Posterior vena cava (tissue), 2 donors: ENCODE measurements at regions of chr6 and their contacts with region 1.

Region 1: GRCh38 chr6:149529650-149530049 is 16.2 kb downstream of the PPIL4 start:
- DNase-seq: no peak

Region 2: DNA sequence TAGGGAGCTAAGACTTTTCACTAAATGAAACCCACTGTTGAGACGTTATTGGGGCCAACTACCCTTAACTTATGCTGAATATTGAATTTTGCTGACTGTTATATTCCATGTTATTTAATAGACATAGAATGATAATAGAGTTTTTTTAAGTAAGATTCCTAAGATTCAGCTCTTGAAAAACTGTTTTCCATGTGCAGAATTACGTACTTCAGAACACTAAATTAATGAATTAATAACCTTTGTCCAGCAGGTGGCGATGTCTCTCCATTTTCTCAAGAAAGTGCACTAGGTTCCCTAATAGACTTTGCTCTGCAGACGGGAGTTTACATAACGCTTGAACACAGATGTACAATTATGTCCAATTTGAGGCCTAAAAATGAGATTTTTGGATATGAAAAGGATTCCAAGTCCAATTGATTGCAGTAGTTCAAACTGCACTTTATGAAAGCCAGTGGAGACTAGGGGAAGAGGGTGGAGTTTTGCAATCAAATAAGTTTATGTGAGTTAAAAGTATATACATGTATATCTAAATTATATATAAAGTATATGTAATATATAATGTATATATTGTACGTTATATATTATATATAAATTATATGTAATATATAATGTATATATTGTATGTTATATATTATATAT is 500.8 kb before region 1 on chr6:
- intact Hi-C with region 1: loop called in 1 of 2 experiments (anchors 5 kb)
- DNase-seq: no peak

Region 3: DNA sequence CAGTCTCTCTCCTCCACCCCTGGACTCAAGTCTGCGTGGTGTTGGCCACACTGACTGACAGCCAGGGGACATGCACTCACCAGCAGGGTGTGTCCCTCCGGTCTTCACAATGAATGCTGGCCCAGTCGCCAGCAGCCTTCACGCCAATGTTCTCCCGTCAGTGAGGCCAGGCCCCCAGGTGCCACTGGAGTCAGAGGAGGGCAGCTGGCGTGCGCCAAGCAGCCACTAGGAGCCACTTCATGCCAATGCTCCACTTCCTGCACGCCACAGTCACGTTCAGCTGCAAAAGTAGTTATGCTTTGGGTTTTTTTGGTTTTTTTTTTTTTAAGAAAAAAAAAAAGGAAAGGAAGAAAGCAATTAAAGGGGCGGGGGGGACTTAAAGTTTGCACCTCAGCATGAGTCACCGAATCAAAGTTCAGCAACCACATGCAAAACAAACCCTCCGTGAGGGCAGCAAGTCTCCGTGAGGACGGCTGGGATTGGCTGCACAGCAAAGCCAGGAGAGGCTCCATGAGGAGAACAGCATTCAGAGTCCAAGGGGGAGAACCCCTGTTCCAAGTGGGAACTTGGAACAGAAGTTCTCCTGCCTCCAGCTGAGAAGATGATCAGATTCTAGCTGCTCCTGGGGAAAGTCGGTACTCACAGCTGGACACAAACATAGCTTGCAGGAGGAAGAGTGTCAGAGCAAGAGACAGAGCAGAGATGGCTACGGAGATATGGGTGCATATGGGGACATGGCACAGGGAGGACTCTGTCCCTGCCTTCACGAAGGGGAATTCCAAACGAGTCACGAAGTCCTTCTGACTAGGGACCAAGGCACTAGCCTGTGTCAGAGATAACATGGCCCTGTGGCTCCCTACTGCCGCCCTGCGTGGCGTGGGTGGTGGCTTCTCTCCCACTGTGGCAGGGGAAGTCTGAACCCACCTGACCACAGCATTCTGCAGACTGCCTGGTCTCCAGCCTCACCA is 44.6 kb before region 1 on chr6 and contains the start of gene ZC3H12D:
- intact Hi-C with region 1: no loop called
- DNase-seq: no peak
- total RNA-seq, gene ZC3H12D: 1.8 to 2.2 TPM

Region 4: GRCh38 chr6:149711711-149712110 is 182.1 kb after region 1 on chr6:
- intact Hi-C with region 1: no loop called
- DNase-seq: no peak

Region 5: DNA sequence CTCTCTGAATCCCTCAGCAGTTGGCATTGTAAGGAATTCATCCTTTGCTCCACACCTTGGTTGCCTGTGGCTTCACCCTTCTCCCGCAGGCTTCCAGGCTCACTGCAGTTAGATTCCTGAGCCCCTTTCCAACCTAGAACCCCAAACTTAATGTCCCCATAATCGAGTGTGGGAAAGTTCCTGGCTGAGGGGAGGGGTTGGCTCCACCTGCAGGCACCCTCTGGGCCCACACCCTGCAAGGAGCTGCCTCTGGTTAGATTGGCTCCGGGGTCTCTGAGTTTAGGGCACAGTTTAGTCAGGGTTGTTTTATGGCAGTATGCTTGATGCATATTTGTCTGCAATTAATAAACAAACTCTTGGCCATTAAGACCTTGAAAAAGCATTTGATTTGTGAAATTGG is 1399.2 kb after region 1 on chr6:
- intact Hi-C with region 1: no loop called
- DNase-seq: peak; percentile 43